Naive thymus-derived CD4-positive, alpha-beta T cell (primary cell): ENCODE measurements at regions of chr20 and their contacts with region 1.

Region 1: GRCh38 chr20:33810885-33811777 is at the start of gene CHMP4B:
- DNase-seq: peak; percentile 94 to 99 (median 98)
- ATAC-seq: peak; percentile 98
- H3K4me3 ChIP-seq: peak within 1 kb of the TSS; percentile 74
- H3K4me3 Mint-ChIP-seq: peak within 1 kb of the TSS; percentile 89 to 100 (median 95)
- H3K27ac ChIP-seq: peak within 1 kb of the TSS; percentile 95
- H3K27ac Mint-ChIP-seq: peak within 1 kb of the TSS; percentile 84 to 96 (median 91)
- H3K4me1 ChIP-seq: peaks cover 22 to 23% of the 10 kb centered on the region in 2 donors
- H3K4me1 Mint-ChIP-seq: peaks cover 36 to 47% (median 42%) of the 10 kb centered on the region in 7 donors
- H3K27me3 ChIP-seq: no peaks in the 10 kb centered on the region
- H3K27me3 Mint-ChIP-seq: peaks cover 0 to 5% (median 0%) of the 10 kb centered on the region in 5 donors
- total RNA-seq, gene CHMP4B: 47.5 to 80.8 (median 54.4) TPM

Region 2: DNA sequence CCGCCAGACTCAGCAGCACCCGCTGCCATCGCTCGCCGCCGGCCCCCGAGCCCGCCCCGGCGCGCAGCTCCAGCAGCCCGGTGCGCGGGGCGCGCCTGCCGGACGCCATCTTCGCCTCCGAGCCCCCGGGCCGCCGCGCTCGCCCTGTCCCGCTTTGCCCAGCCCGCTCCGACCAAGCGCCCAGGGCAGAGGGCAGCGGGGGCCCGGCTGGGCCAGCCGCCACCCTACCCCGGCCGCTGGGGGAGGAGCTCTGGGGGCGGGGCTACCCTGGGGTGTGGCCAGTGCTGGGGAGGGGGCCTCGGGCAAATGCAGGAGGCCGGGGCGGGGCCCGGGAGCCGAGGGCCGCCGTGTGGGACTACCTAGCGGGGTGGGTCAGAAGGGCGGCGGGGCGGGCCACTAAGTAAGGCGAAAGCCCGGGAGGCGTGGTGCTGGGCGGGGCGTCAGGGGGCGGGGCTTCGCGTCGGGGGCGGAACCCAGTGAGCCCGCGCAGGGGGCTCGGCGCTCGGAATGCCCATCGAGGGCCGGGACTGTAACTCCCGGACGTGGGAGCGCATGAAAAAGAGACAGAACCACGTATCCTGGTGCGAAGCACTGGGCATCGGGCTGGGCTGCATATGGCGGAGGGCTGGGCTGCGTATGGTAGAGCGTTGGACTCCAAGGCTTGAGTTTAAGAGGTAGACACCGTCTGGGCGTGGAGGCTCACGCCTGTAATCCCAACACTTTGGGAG is 367.5 kb before region 1 on chr20 and contains the start of gene SNTA1:
- CTCF ChIA-PET with region 1: no interaction called
- POLR2A ChIA-PET with region 1: no interaction called
- intact Hi-C with region 1: loop called (anchors 1 kb)
- DNase-seq: peak; percentile 51 to 90 (median 70)
- ATAC-seq: peak; percentile 84
- H3K4me3 ChIP-seq: peak within 1 kb of the TSS; percentile 96
- H3K4me3 Mint-ChIP-seq: peak within 1 kb of the TSS; percentile 82 to 96 (median 92)
- H3K27ac ChIP-seq: peak within 1 kb of the TSS; percentile 62
- H3K27ac Mint-ChIP-seq: peak within 1 kb of the TSS; percentile 69 to 95 (median 90)
- H3K4me1 ChIP-seq: peaks cover 10 to 11% of the 10 kb centered on the region in 2 donors
- H3K4me1 Mint-ChIP-seq: peaks cover 16 to 32% (median 22%) of the 10 kb centered on the region in 7 donors
- H3K27me3 ChIP-seq: no peaks in the 10 kb centered on the region
- H3K27me3 Mint-ChIP-seq: peaks cover 0 to 19% (median 0%) of the 10 kb centered on the region in 5 donors
- total RNA-seq, gene SNTA1: 2.0 to 3.2 (median 2.9) TPM

Region 3: DNA sequence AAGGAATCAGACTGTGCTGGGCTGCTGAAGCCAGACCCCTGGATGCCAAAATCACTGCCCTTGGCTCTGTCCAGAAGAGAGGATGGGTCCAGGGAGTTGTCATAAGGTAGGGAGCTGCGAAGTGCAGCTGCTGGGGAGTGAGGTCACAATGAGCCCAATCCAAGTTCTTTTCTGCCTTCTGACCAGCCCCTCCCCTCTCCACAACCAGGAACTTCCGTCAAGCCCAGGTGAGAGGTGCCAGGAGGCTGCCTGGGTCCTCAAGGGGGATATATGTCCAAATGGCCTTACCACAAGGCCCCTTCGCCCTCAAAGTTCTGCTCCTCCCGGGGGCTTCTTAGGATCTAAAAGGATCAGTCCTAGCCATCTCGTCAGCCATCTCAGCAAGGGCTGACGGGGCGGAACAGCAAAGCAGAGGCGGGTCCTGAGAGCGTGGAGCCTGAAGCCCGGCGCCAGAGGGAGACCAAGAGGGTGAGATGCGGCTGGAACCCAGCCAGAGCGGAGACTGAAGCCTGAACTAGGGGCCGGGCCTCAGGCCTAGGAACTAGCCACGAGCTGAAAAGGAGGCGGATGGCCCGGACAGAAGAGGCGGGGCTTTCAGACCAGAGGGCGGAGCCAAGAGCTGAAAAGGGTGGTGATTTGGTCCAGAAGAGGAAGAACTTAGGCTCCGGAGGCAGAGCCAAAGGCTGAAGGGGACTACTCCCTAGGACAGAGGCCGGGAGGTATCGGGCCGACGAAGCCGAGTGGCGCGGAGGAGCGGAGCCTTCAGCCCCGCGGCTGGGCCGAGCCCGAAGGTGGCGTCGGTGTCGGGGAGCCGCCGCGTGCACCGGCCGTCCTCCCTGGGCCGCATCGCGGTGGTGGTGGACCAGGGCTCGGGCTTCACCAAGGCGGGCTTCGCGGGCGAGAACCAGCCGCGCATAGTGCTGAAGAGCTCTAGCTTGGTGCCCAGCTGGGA is 144.6 kb before region 1 on chr20 and contains the start of gene ACTL10:
- CTCF ChIA-PET with region 1: no interaction called
- POLR2A ChIA-PET with region 1: interaction called, 4 read pairs
- intact Hi-C with region 1: loop called (anchors 1 to 10 kb)
- DNase-seq: peak; percentile 45 to 86 (median 60)
- ATAC-seq: peak; percentile 79
- H3K4me3 ChIP-seq: peak within 1 kb of the TSS; percentile 79
- H3K4me3 Mint-ChIP-seq: peak within 1 kb of the TSS; percentile 95 to 100 (median 98)
- H3K27ac ChIP-seq: peak within 1 kb of the TSS; percentile 60
- H3K27ac Mint-ChIP-seq: peak within 1 kb of the TSS; percentile 90 to 98 (median 95)
- H3K4me1 ChIP-seq: peaks cover 19 to 21% of the 10 kb centered on the region in 2 donors
- H3K4me1 Mint-ChIP-seq: peaks cover 21 to 54% (median 35%) of the 10 kb centered on the region in 7 donors
- H3K27me3 ChIP-seq: no peaks in the 10 kb centered on the region
- H3K27me3 Mint-ChIP-seq: no peaks in the 10 kb centered on the region
- total RNA-seq, gene ACTL10: 0.66 to 4.9 (median 3.2) TPM

Region 4: GRCh38 chr20:33702861-33703260 is 108.3 kb before region 1 on chr20:
- CTCF ChIA-PET with region 1: no interaction called
- POLR2A ChIA-PET with region 1: no interaction called
- intact Hi-C with region 1: no loop called
- DNase-seq: no peak
- ATAC-seq: no peak
- H3K4me3 ChIP-seq: no peak overlapping the region
- H3K4me3 Mint-ChIP-seq: no peak overlapping the region
- H3K27ac ChIP-seq: no peak overlapping the region
- H3K27ac Mint-ChIP-seq: peak overlapping the region in 3 of 9 donors; percentile 25 to 74 (median 56)
- H3K4me1 ChIP-seq: no peaks in the 10 kb centered on the region
- H3K4me1 Mint-ChIP-seq: peaks cover 0 to 2% (median 0%) of the 10 kb centered on the region in 7 donors
- H3K27me3 ChIP-seq: no peaks in the 10 kb centered on the region
- H3K27me3 Mint-ChIP-seq: no peaks in the 10 kb centered on the region

Region 5: GRCh38 chr20:33731693-33732165 is 79.4 kb before region 1 on chr20 and contains the start of gene ZNF341:
- CTCF ChIA-PET with region 1: interaction called, 3 read pairs
- POLR2A ChIA-PET with region 1: interaction called, 5 read pairs
- intact Hi-C with region 1: loop called (anchors 1 kb)
- DNase-seq: peak in 7 of 9 donors; percentile 84 to 92 (median 88)
- ATAC-seq: peak; percentile 92
- H3K4me3 ChIP-seq: peak within 1 kb of the TSS; percentile 84
- H3K4me3 Mint-ChIP-seq: peak within 1 kb of the TSS; percentile 82 to 97 (median 90)
- H3K27ac ChIP-seq: peak within 1 kb of the TSS; percentile 75
- H3K27ac Mint-ChIP-seq: peak within 1 kb of the TSS; percentile 90 to 98 (median 97)
- H3K4me1 ChIP-seq: peaks cover 3 to 18% of the 10 kb centered on the region in 2 donors
- H3K4me1 Mint-ChIP-seq: peaks cover 12 to 36% (median 20%) of the 10 kb centered on the region in 7 donors
- H3K27me3 ChIP-seq: no peaks in the 10 kb centered on the region
- H3K27me3 Mint-ChIP-seq: peaks cover 0 to 3% (median 0%) of the 10 kb centered on the region in 5 donors
- total RNA-seq, gene ZNF341: 3.5 to 6.1 (median 5.5) TPM

Region 6: GRCh38 chr20:33890557-33890956 is 79.4 kb after region 1 on chr20:
- CTCF ChIA-PET with region 1: no interaction called
- POLR2A ChIA-PET with region 1: no interaction called
- intact Hi-C with region 1: no loop called
- DNase-seq: no peak
- ATAC-seq: no peak
- H3K4me3 ChIP-seq: no peak overlapping the region
- H3K4me3 Mint-ChIP-seq: no peak overlapping the region
- H3K27ac ChIP-seq: no peak overlapping the region
- H3K27ac Mint-ChIP-seq: no peak overlapping the region
- H3K4me1 ChIP-seq: no peaks in the 10 kb centered on the region
- H3K4me1 Mint-ChIP-seq: no peaks in the 10 kb centered on the region
- H3K27me3 ChIP-seq: no peaks in the 10 kb centered on the region
- H3K27me3 Mint-ChIP-seq: peaks cover 0 to 40% (median 0%) of the 10 kb centered on the region in 5 donors

Region 7: DNA sequence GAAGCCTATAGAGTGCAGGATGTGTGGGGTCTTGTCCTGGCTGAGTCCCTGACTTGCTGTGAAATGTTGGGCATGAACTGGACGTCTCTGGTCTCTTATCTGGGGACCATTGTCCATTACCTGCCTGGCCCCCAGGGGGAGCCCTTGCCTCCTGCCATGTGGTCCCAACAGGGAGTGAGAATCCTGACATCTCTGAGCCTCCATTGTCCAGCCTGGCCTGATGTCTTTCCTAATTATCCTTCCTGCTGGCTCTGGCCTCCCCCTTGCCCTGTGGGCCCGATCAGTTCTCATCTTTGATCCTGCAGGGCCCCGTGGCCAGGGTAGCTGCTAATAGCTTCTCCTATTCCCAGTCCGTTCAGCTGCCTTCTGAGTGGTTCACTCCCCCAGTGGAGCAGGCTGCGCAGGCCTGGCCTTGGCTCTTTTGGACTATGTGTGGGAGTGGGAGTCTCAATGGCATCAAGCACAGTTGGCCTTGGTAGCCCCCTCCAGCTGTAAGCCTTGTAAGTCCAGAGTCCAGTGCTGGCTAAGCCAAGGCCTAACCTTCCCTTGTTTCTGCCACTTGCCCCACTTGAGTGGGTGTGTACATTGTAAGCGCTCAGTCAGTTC is 104.7 kb after region 1 on chr20:
- CTCF ChIA-PET with region 1: interaction called, 5 read pairs
- POLR2A ChIA-PET with region 1: interaction called, 3 read pairs
- intact Hi-C with region 1: loop called (anchors 1 kb)
- DNase-seq: peak in 8 of 9 donors; percentile 11 to 62 (median 30)
- ATAC-seq: peak; percentile 76
- H3K4me3 ChIP-seq: no peak overlapping the region
- H3K4me3 Mint-ChIP-seq: no peak overlapping the region
- H3K27ac ChIP-seq: no peak overlapping the region
- H3K27ac Mint-ChIP-seq: peak overlapping the region in 1 of 9 donors; percentile 25
- H3K4me1 ChIP-seq: peaks cover 0 to 4% of the 10 kb centered on the region in 2 donors
- H3K4me1 Mint-ChIP-seq: peaks cover 5 to 20% (median 15%) of the 10 kb centered on the region in 7 donors
- H3K27me3 ChIP-seq: no peaks in the 10 kb centered on the region
- H3K27me3 Mint-ChIP-seq: peaks cover 0 to 31% (median 0%) of the 10 kb centered on the region in 5 donors

Region 8: DNA sequence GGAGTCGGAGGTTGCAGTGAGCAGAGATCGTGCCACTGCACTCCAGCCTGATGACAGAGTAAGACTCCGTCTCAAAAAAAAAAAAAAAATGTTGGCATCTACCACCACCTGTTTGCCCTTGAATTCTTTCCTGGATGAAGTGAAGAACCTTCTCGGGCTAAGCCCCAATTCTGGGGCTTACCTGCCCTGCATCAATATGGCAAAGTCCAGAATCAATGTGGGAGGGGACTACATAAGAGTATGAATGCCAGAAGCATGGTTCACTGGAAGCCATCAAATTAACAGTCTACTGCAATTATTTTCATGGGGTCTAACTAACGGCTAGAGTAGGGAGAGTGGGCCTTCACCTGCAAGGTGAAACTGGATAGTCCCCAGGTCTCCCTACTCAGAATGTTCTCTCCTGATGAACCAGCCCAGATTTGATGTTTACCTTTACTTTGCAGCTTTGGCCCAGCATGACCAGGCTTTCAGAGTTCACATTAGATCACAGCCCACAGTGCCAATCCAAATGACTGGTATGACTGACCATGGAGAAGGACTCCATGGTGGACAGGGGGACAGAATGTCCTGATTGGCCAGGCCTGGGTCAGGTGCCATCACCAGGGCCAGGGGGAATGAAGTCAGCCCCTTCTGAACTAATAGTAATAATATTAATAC is 175.6 kb after region 1 on chr20:
- CTCF ChIA-PET with region 1: no interaction called
- POLR2A ChIA-PET with region 1: no interaction called
- intact Hi-C with region 1: no loop called
- DNase-seq: no peak
- ATAC-seq: no peak
- H3K4me3 ChIP-seq: no peak overlapping the region
- H3K4me3 Mint-ChIP-seq: no peak overlapping the region
- H3K27ac ChIP-seq: no peak overlapping the region
- H3K27ac Mint-ChIP-seq: no peak overlapping the region
- H3K4me1 ChIP-seq: peaks cover 0 to 3% of the 10 kb centered on the region in 2 donors
- H3K4me1 Mint-ChIP-seq: peaks cover 11 to 23% (median 17%) of the 10 kb centered on the region in 7 donors
- H3K27me3 ChIP-seq: no peaks in the 10 kb centered on the region
- H3K27me3 Mint-ChIP-seq: peaks cover 0 to 2% (median 0%) of the 10 kb centered on the region in 5 donors

Region 9: DNA sequence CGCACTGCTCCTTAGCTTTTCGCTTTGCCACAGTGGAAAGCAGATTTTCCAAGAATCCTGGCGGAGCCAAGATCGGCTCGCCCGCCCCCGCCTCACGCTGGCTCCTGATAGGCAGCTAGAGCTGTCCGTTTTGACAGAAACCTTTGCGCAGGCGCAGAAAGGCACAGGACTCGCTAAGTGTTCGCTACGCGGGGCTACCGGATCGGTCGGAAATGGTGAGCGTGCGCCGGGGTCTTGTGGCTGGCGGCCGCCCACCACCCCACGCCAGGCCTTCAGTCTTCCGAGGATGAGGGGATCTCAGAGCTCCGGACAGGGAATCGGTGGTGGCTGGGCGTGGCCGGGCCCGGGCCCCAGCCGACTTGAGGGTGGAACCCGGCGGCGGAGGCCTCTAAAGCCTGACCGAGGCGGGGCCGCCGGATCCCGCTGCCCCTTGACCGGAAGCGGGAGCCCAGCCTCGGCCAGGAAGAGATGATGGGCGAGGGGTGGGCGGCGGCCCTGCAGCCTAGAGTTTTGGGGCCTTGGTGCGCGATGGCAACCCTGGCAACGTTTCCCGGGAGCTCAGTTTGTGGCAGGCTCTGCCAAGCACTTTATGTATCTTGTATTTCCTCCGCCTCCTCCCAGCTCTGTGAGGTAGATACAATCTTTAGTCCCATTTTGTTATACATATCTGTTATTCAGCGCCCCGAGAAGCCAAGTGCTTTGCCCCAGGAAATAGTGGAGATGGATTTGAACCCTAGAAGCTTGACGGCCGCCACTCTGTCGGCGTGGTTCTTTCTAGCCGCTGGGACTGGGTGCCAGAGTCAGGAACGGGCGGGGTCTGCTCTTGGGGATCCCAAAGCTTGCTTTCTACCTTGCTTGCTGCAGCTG is 705.3 kb after region 1 on chr20 and contains the start of gene DYNLRB1:
- CTCF ChIA-PET with region 1: no interaction called
- POLR2A ChIA-PET with region 1: no interaction called
- intact Hi-C with region 1: loop called in 1 of 2 experiments (anchors 2 kb)
- DNase-seq: peak; percentile 87 to 94 (median 92)
- ATAC-seq: peak; percentile 88
- H3K4me3 ChIP-seq: peak within 1 kb of the TSS; percentile 96
- H3K4me3 Mint-ChIP-seq: peak within 1 kb of the TSS; percentile 97 to 100 (median 99)
- H3K27ac ChIP-seq: peak within 1 kb of the TSS; percentile 86
- H3K27ac Mint-ChIP-seq: peak within 1 kb of the TSS; percentile 94 to 99 (median 97)
- H3K4me1 ChIP-seq: peaks cover 8 to 11% of the 10 kb centered on the region in 2 donors
- H3K4me1 Mint-ChIP-seq: peaks cover 12 to 59% (median 51%) of the 10 kb centered on the region in 7 donors
- H3K27me3 ChIP-seq: no peaks in the 10 kb centered on the region
- H3K27me3 Mint-ChIP-seq: no peaks in the 10 kb centered on the region
- total RNA-seq, gene DYNLRB1: 45.9 to 91.9 (median 60.7) TPM

Region 10: DNA sequence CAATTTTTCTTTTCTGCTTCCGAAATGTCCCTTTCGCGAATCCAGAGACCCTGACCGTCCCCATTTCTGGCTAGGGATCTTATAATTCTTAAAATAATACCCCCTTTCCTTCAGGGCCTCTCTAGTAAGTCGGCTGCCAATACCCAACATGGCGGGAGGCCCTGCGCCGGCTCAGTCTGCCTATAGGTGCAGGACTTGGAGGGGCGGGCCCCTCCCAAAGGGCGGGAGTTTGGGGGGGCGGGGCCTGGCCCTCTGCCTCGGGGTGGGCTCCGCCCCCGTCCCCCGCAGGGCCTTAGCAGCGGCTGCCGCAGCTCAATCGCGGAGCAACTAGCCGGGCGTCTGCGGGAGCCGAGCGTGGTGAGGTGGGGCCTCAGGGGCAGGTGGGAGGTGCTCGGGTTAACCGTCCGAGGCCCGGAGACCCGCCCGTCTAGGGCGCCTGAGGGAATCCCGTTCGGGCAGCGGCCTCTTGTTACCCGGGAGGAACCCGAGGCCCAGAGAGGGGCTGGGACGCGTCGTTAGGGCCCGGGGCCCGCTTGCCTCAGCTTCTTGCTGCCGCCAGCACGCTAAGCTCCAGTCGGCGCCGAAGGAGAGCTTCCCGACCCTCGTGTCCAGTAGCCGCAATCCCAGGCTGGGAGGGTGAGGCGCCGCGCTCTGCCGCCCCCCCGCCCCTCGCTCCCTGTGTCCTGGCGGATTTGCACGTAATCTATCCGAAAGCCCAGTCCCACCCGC is 1643.9 kb after region 1 on chr20 and contains the start of gene CEP250:
- CTCF ChIA-PET with region 1: no interaction called
- POLR2A ChIA-PET with region 1: no interaction called
- intact Hi-C with region 1: loop called in 1 of 2 experiments (anchors 10 kb)
- DNase-seq: peak; percentile 89 to 97 (median 96)
- ATAC-seq: peak; percentile 99
- H3K4me3 ChIP-seq: peak within 1 kb of the TSS; percentile 94
- H3K4me3 Mint-ChIP-seq: peak within 1 kb of the TSS; percentile 82 to 98 (median 93)
- H3K27ac ChIP-seq: peak within 1 kb of the TSS; percentile 94
- H3K27ac Mint-ChIP-seq: peak within 1 kb of the TSS; percentile 86 to 99 (median 98)
- H3K4me1 ChIP-seq: no peaks in the 10 kb centered on the region
- H3K4me1 Mint-ChIP-seq: peaks cover 0 to 38% (median 23%) of the 10 kb centered on the region in 7 donors
- H3K27me3 ChIP-seq: no peaks in the 10 kb centered on the region
- H3K27me3 Mint-ChIP-seq: no peaks in the 10 kb centered on the region
- total RNA-seq, gene CEP250: 34.5 to 75.0 (median 70.7) TPM